ENCODE measurements at regions of chr7 and their contacts with region 1.

Region 1: GRCh38 chr7:5636914-5637313 is 144.5 kb downstream of the RNF216 start:
- DNase-seq: no peak
- ATAC-seq: no peak
- H3K4me3 ChIP-seq: no peak overlapping the region
- H3K27ac ChIP-seq: no peak overlapping the region
- H3K4me1 ChIP-seq: no peaks in the 10 kb centered on the region
- H3K27me3 ChIP-seq: no peaks in the 10 kb centered on the region
- CTCF ChIP-seq: no peak

Region 2: DNA sequence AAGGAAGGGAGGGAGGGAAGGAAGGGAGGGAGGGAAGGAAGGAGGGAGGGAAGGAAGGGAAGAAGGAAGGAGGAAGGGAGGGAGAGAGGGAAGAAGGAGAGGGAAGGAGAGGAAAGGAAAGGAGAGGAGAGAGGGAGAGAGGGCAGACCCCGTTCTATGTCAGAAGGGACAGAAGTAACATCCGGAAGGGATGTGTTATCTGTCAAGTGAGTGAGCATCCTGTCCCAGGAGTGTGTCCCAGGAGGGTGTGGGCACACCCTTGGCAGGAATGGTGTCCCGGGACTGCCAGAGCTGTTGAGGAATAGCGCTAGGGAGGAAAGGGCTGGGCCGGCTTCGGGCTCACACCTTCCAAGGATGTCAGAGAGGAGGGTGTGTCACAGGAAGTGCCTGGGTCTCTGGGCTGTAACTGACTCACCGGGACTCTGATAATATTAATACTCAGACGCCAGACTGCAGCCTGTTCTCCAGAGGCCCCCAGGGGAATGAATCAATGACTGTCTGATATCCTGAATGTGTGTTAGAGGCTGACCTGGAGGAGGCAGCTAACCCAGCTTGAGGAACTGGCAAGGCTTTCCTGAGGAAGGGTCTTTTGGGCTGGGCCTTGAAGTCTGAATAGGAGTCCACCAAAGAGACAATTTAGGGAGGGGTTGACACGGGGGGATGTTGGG is 87.7 kb before region 1 on chr7:
- CTCF ChIA-PET with region 1: interaction called, 21 read pairs
- POLR2A ChIA-PET with region 1: no interaction called
- in situ Hi-C with region 1: no loop called
- intact Hi-C with region 1: no loop called
- DNase-seq: no peak
- ATAC-seq: peak; percentile 75
- H3K4me3 ChIP-seq: peak overlapping the region in 1 of 2 experiments; percentile 9; a peak in 1 of 4 replicates
- H3K27ac ChIP-seq: peak overlapping the region; percentile 24; the same call in 1 of the 2 replicates
- H3K4me1 ChIP-seq: peaks cover 17% of the 10 kb centered on the region
- H3K27me3 ChIP-seq: no peaks in the 10 kb centered on the region
- CTCF ChIP-seq: no peak

Region 3: DNA sequence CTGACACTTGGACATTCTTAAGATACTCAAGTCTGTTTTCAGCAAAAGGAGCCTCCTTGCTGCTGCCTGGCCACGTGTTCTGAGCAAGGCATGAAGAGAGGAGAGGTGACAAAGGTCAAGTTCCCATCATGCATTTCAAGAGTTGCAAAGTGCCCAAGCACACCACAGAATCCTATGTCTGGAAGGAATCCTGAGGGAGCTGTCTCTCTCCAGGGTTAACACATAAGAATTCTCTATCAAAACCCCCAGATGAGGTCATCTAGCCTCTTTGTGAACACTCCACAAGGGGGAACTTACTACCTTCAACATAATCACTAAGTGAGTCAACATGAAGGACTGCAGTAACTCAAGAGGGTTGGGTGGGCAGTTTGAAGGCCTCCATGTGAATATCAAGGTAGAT is 11.0 kb before region 1 on chr7:
- CTCF ChIA-PET with region 1: no interaction called
- POLR2A ChIA-PET with region 1: no interaction called
- in situ Hi-C with region 1: no loop called
- intact Hi-C with region 1: no loop called
- DNase-seq: no peak
- ATAC-seq: no peak
- H3K4me3 ChIP-seq: no peak overlapping the region
- H3K27ac ChIP-seq: no peak overlapping the region
- H3K4me1 ChIP-seq: no peaks in the 10 kb centered on the region
- H3K27me3 ChIP-seq: no peaks in the 10 kb centered on the region
- CTCF ChIP-seq: no peak